Thyroid gland (tissue), 4 donors: ENCODE measurements at regions of chr1 and their contacts with region 1.

Region 1: DNA sequence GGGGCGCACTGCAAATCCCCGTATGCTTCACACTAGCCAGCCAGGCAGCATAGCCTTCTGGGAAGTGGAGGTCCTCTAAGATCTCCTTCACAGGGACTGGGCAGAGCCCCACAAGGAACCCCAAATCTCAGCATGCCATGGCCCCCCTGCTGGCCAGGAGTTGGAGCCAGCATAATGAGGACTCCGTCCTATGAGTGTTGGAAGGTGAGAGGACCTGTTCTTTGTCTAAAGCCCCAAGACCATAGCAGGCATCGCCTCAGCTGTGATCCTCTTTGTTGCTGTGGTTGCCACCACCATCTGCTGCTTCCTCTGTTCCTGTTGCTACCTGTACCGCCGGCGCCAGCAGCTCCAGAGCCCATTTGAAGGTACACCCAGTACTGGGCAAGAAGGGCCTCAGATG is 1.5 kb downstream of the SHISA4 start:
- DNase-seq: no peak
- H3K4me3 ChIP-seq: no peak overlapping the region
- H3K27ac ChIP-seq: no peak overlapping the region
- H3K4me1 ChIP-seq: peaks cover 10 to 30% of the 10 kb centered on the region in 2 donors
- H3K27me3 ChIP-seq: no peaks in the 10 kb centered on the region
- CTCF ChIP-seq: no peak
- POLR2A ChIP-seq: no peak

Region 2: GRCh38 chr1:201970334-201971159 is 80.3 kb after region 1 on chr1:
- intact Hi-C with region 1: loop called (anchors 2 kb)
- DNase-seq: no peak
- H3K4me3 ChIP-seq: no peak overlapping the region
- H3K27ac ChIP-seq: no peak overlapping the region
- H3K4me1 ChIP-seq: no peaks in the 10 kb centered on the region
- H3K27me3 ChIP-seq: no peaks in the 10 kb centered on the region
- CTCF ChIP-seq: no peak
- POLR2A ChIP-seq: no peak

Region 3: GRCh38 chr1:202247894-202248681 is 357.9 kb after region 1 on chr1:
- intact Hi-C with region 1: no loop called
- DNase-seq: no peak
- H3K4me3 ChIP-seq: no peak overlapping the region
- H3K27ac ChIP-seq: no peak overlapping the region
- H3K4me1 ChIP-seq: no peaks in the 10 kb centered on the region
- H3K27me3 ChIP-seq: no peaks in the 10 kb centered on the region
- CTCF ChIP-seq: no peak
- POLR2A ChIP-seq: no peak